Aorta (tissue), 5 donors: ENCODE measurements at regions of chr17 and their contacts with region 1.

Region 1: DNA sequence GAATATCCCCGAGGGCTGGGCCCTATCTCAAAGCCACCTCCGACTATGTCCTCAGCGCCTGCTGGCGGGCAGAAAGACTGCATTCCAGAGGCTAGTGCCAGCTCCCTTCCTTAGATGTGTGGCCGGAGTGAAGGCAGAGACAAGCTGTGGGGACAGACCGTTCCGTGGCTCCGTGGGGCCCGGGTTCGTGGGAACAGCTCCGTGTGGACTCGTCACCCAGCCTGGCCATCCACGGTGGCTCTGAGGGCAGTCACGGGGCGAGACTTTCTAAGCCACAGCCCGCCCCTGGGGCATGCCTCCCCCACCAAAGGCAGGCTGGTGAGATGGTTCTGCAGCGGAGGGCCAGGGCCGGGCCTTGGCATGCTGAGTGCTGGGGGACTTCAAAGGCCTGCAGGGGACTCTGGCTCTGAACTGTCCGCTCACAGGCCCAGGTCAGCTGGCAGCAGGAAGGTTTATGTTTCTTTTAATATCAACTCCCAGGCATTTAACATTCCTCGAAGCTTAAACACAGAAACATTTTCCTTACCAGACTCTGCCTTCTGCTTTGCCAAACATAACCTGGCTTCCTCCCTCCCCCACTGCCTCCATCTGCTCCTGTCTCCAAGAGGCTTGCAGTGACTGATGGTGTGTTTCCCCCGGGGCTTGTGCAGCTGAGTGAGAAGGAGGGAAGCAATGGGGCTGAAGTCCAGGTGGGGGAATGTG is 50.4 kb downstream of the TIMM22 start:
- DNase-seq: peak; percentile 80 to 89
- ATAC-seq: peak; percentile 67
- H3K4me3 ChIP-seq: no peak overlapping the region
- H3K27ac ChIP-seq: peak overlapping the region; percentile 83 to 94
- H3K4me1 ChIP-seq: peaks cover 0 to 5% of the 10 kb centered on the region in 2 donors
- H3K27me3 ChIP-seq: no peaks in the 10 kb centered on the region

Region 2: GRCh38 chr17:1031711-1032110 is 15.6 kb before region 1 on chr17:
- intact Hi-C with region 1: loop called in 1 of 2 experiments (anchors 2 kb)
- DNase-seq: peak; percentile 84 to 91
- ATAC-seq: peak; percentile 72
- H3K4me3 ChIP-seq: peak overlapping the region; percentile 39 to 43
- H3K27ac ChIP-seq: peak overlapping the region in 1 of 2 donors; percentile 37
- H3K4me1 ChIP-seq: no peaks in the 10 kb centered on the region
- H3K27me3 ChIP-seq: no peaks in the 10 kb centered on the region